ENCODE measurements at regions of chr4 and their contacts with region 1.

Region 1: GRCh38 chr4:151266497-151266896 is 10.5 kb upstream of the PRSS48 start:
- DNase-seq: no peak
- CTCF ChIP-seq: no peak

Region 2: GRCh38 chr4:151276787-151277562 is 10.5 kb after region 1 on chr4 and contains the start of gene PRSS48:
- CTCF ChIA-PET with region 1: interaction called, 39 read pairs
- POLR2A ChIA-PET with region 1: no interaction called
- DNase-seq: peak; percentile 58
- CTCF ChIP-seq: peak; percentile 67